Activated CD4-positive, alpha-beta memory T cell treated with anti-CD3 and anti-CD28 coated beads for 36 hours (primary cell): ENCODE measurements at regions of chr1 and their contacts with region 1.

Region 1: DNA sequence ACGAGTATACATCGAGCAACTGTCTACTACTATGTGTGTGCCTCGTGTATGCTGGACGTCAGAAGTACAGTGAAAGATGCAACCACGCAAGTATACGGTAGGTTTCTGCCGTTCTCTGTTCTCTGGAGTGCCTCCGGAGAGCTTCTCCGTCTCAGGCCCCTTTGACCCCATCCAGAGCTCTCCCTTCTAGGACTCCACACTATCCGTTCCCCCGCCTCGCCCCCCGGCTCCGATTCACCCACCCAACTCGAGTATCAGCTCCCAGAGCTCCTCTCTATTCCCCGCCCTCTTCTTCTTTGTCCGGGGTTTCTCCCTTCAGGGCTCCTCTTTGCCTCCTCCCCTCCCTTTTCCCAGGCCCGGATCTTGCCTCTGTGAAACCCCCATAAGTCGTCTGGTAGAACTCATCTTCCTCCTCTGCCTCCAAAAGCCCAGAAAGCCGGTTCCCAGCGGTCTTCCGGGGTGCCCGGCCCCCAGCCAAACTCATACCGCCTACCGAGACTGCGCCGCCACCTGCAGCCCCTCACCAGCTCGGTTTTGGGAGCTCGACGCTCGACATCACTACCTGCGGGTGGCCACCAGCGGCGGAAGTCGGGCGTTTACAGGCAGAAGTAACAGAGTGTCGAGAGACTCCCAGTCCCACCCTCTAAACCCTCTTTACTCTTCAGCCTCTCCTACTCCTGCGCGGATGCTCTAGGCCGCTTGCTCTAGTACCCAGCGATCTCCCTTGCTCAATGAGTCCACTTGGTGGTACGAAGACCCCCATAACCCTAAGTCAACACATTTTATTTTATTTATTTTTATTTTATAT is at the start of gene VPS72:
- DNase-seq: peak; percentile 93
- H3K4me3 Mint-ChIP-seq: peak within 1 kb of the TSS; percentile 97
- H3K27ac Mint-ChIP-seq: peak within 1 kb of the TSS; percentile 94
- H3K4me1 Mint-ChIP-seq: peaks cover 22% of the 10 kb centered on the region
- H3K27me3 Mint-ChIP-seq: no peaks in the 10 kb centered on the region
- total RNA-seq, gene VPS72: 77.6 to 80.4 TPM

Region 2: DNA sequence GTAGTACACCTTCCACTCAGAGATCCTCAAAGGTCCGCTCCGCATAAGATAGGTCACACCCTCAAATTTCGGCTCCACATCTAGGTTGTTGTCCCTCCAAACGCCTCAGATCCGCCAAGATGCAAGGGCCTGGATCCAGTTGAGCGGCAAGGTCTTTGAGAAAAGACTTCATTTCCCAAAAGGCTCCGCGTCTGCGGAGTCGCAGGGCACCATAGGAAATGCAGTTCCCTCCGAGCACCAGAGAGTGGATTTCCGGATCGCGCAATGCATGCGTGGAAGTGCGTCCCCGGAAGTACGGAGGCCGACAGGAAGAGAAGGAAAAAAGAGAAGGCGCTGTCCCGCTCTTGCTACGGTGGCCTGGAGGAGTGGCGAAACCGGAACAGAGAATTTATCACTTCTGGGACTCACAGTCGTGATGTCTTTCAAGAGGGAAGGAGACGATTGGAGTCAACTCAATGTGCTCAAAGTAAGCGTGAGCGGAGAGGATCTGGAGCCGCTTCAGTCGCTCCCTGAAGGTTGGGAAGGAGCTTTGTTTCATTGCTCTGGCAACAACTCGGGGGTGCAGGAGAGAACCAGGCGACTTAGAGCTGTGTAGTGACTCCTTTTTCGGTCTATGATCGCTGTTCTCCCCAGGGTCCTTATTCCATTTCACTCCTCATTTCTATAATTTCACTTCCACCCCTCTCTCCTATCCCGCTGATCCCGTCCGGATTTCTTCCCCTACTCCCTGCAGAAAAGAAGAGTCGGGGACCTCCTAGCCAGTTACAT is 23.9 kb before region 1 on chr1 and contains the starts of genes LYSMD1 and SCNM1:
- CTCF ChIA-PET with region 1: no interaction called
- POLR2A ChIA-PET with region 1: interaction called, 6 read pairs
- intact Hi-C with region 1: loop called (anchors 1 kb)
- DNase-seq: peak; percentile 99
- H3K4me3 Mint-ChIP-seq: peak within 1 kb of the TSS; percentile 92
- H3K27ac Mint-ChIP-seq: peak within 1 kb of the TSS; percentile 92
- H3K4me1 Mint-ChIP-seq: peaks cover 49% of the 10 kb centered on the region
- H3K27me3 Mint-ChIP-seq: peaks cover 2% of the 10 kb centered on the region
- total RNA-seq, gene LYSMD1: 1.8 to 2.6 TPM
- total RNA-seq, gene SCNM1: 67.5 to 67.8 TPM